Right ventricle myocardium inferior (tissue), 1 donor: ENCODE measurements at regions of chr12 and their contacts with region 1.

Region 1: GRCh38 chr12:117025481-117026151 is 73.6 kb downstream of the TESC start:
- DNase-seq: no peak
- ATAC-seq: peak; percentile 90

Region 2: GRCh38 chr12:116891952-116892744 is 133.5 kb before region 1 on chr12:
- intact Hi-C with region 1: no loop called
- DNase-seq: no peak
- ATAC-seq: no peak

Region 3: GRCh38 chr12:117084405-117085317 is 59.0 kb after region 1 on chr12:
- intact Hi-C with region 1: loop called (anchors 1 kb)
- DNase-seq: no peak
- ATAC-seq: peak; percentile 41

Region 4: GRCh38 chr12:117119592-117120198 is 94.1 kb after region 1 on chr12:
- intact Hi-C with region 1: loop called (anchors 1 kb)
- DNase-seq: peak; percentile 71
- ATAC-seq: peak; percentile 35

Region 5: DNA sequence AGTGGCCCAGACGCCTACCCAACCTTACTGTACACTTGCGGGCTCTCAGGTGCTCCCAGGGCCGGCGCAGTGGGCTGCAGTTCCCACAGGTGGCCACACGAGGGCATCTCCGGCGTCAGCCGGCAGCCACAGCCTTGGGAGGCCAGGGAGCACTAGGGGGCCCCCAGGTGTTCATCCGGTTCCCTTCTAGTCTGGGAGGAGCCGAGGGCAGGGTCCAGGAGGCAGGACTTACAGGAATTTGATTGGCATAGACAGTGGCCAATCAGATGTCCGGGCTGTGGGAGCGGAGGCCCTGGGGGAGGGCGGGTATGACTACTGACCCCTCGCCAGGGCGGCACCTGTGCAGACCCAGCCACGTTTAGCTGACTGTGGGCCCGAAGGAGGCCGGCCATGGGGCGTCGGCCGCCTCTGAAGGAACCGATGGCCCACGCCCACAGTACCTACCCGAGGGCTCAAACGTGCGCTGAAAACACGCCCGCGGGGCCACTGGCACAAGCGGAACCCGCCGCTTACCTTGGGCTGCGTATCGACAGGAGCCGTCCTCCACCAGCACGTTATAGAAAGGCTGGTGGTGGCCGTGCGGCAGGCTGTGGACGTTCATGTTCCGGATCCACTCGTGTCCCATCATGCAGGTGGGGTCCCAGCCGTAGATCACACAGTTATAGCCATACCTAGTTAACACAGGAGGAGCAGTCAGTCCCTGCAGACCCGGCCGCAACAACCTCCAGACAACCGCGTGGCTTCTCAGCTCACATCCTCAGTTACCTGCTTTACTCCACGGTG is 129.9 kb after region 1 on chr12:
- intact Hi-C with region 1: loop called (anchors 1 kb)
- DNase-seq: no peak
- ATAC-seq: peak; percentile 37